Natural killer cell (primary cell): ENCODE measurements at regions of chr7 and their contacts with region 1.

Region 1: GRCh38 chr7:107743567-107744344 is at the start of gene CBLL1:
- DNase-seq: peak; percentile 97 to 98
- ATAC-seq: peak; percentile 88 to 97 (median 90)
- H3K4me3 ChIP-seq: peak within 1 kb of the TSS; percentile 81
- H3K4me3 Mint-ChIP-seq: peak within 1 kb of the TSS; percentile 96
- H3K27ac ChIP-seq: peak within 1 kb of the TSS; percentile 99
- H3K27ac Mint-ChIP-seq: peak within 1 kb of the TSS; percentile 100
- H3K4me1 ChIP-seq: peaks cover 15% of the 10 kb centered on the region
- H3K4me1 Mint-ChIP-seq: peaks cover 42 to 48% of the 10 kb centered on the region in 2 donors
- H3K27me3 ChIP-seq: no peaks in the 10 kb centered on the region
- H3K27me3 Mint-ChIP-seq: no peaks in the 10 kb centered on the region
- CTCF ChIP-seq: peak; percentile 65
- total RNA-seq, gene CBLL1: 62.7 to 85.8 (median 82.0) TPM

Region 2: DNA sequence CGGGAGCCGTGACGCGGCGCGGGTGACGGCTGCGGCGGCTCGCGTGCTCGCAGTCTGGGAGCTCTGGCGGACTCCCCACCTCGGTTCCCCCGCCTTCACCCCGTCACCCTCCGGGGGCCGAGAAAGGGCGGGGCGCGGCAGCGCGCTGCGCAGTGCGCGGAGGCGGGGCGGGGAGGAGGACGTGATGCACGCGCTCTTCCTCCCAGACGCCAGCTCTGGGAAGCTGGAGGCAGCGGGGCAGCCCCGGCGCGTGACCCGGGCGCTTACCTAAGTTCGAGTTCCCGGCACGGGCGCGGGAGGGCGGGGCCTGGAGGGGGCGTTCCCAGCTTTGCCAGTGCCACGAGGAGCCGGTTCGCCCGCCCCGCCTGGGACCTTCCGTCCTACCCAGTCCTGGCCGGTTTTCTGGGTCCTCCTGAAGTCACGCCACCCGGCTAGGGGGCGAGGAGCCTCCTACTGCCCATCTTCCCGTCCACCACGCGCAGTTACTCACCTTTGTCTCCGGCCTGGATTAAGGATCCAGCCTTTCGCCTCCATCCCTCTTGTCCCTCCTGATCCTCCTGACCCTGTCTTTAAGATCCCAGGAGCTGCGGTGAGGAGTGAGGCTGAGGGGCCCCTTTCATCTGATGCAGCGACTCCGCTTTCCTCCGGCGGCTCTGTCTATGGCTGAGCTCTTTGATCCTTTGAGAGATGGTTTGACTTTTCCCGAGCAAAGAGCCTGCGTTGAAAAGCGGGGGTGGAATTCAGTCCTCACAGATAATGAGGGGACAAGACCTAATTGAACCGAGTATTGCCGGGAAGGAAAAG is 1458.5 kb before region 1 on chr7:
- intact Hi-C with region 1: loop called (anchors 10 kb)
- DNase-seq: peak; percentile 92 to 98
- ATAC-seq: peak; percentile 88 to 96 (median 89)
- H3K4me3 ChIP-seq: peak overlapping the region; percentile 97
- H3K4me3 Mint-ChIP-seq: peak overlapping the region; percentile 95
- H3K27ac ChIP-seq: peak overlapping the region; percentile 97
- H3K27ac Mint-ChIP-seq: peak overlapping the region; percentile 93 to 95
- H3K4me1 ChIP-seq: peaks cover 12% of the 10 kb centered on the region
- H3K4me1 Mint-ChIP-seq: peaks cover 16 to 20% of the 10 kb centered on the region in 2 donors
- H3K27me3 ChIP-seq: no peaks in the 10 kb centered on the region
- H3K27me3 Mint-ChIP-seq: peaks cover under 1 to 2% of the 10 kb centered on the region in 2 donors
- CTCF ChIP-seq: no peak

Region 3: DNA sequence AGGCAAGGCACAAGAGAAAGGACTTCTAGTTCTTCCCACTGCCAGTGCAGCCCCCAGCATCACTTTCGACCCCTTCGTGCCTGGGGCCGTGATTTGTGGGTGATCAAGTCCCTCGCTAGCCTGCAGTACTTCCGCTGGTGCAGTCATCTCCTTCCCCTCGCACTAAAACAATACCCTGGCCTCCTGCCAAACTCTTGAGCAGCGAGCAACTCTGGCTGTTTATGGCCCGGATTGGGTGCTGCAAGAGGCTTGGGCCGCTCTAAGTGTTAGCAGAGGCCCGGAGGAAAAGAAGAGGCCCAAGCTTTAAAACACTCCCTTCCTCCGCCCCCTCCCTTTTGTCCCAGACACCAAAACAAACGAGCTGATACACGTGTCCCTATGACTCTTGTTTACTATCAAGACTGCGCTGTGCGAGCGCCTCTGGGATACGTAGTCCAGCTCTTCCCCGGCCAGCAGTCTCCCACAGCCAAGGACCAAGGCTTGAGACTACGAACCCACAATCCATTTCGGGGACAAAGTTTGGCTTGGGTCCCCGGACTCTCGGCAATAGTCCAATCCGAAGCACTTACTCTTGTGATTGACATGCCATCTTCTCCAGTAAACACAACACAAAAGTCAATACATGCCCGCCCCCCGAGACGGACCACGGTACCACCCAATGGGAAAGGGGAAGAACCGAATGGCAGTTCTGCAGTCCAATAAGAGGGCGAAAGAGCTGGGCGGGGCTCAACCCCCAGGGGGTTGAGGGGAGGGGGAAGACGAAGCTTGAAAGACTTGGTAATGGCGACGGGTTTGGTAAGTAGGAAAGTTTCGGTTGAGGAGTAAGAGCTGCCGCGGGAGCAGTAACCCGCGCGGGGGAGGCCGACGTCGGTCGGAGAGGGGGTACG is 575.3 kb before region 1 on chr7 and contains the start of gene HBP1:
- intact Hi-C with region 1: loop called (anchors 2 kb)
- DNase-seq: peak; percentile 95 to 99
- ATAC-seq: peak; percentile 74 to 90 (median 78)
- H3K4me3 ChIP-seq: peak within 1 kb of the TSS; percentile 96
- H3K4me3 Mint-ChIP-seq: peak within 1 kb of the TSS; percentile 95
- H3K27ac ChIP-seq: peak within 1 kb of the TSS; percentile 99
- H3K27ac Mint-ChIP-seq: peak within 1 kb of the TSS; percentile 99 to 100
- H3K4me1 ChIP-seq: peaks cover 11% of the 10 kb centered on the region
- H3K4me1 Mint-ChIP-seq: peaks cover 36 to 49% of the 10 kb centered on the region in 2 donors
- H3K27me3 ChIP-seq: no peaks in the 10 kb centered on the region
- H3K27me3 Mint-ChIP-seq: peaks cover 4% of the 10 kb centered on the region in 2 donors
- CTCF ChIP-seq: no peak
- total RNA-seq, gene HBP1: 186 to 249 (median 243) TPM

Region 4: GRCh38 chr7:107879400-107880035 is 135.8 kb after region 1 on chr7:
- intact Hi-C with region 1: loop called (anchors 2 kb)
- DNase-seq: peak in 1 of 2 donors; percentile 73
- ATAC-seq: peak; percentile 79 to 84 (median 83)
- H3K4me3 ChIP-seq: no peak overlapping the region
- H3K4me3 Mint-ChIP-seq: no peak overlapping the region
- H3K27ac ChIP-seq: no peak overlapping the region
- H3K27ac Mint-ChIP-seq: no peak overlapping the region
- H3K4me1 ChIP-seq: no peaks in the 10 kb centered on the region
- H3K4me1 Mint-ChIP-seq: peaks cover 0 to 2% of the 10 kb centered on the region in 2 donors
- H3K27me3 ChIP-seq: no peaks in the 10 kb centered on the region
- H3K27me3 Mint-ChIP-seq: peaks cover 18 to 32% of the 10 kb centered on the region in 2 donors
- CTCF ChIP-seq: peak; percentile 78

Region 5: DNA sequence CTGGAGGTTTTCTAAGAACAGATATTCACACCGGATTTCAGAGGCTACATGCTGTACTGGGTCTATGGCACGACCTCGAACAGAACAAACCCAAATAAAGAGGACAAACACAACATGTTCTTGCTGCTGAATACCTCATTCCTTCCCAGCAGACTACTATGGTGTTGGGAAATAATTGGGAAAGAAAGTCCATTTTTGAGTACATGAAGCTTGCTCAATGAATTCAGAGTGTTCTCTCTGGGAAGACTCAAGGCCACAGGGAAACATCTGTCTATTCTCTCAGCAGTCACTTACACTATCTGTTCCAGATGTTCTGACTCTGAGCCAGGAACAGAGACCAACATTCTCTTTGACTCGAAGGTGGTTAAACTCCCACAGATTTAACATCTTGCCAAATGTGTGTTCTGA is 228.3 kb after region 1 on chr7:
- intact Hi-C with region 1: no loop called
- DNase-seq: no peak
- ATAC-seq: no peak
- H3K4me3 ChIP-seq: no peak overlapping the region
- H3K4me3 Mint-ChIP-seq: no peak overlapping the region
- H3K27ac ChIP-seq: no peak overlapping the region
- H3K27ac Mint-ChIP-seq: no peak overlapping the region
- H3K4me1 ChIP-seq: no peaks in the 10 kb centered on the region
- H3K4me1 Mint-ChIP-seq: no peaks in the 10 kb centered on the region
- H3K27me3 ChIP-seq: no peaks in the 10 kb centered on the region
- H3K27me3 Mint-ChIP-seq: peaks cover 0 to 5% of the 10 kb centered on the region in 2 donors
- CTCF ChIP-seq: no peak

Region 6: DNA sequence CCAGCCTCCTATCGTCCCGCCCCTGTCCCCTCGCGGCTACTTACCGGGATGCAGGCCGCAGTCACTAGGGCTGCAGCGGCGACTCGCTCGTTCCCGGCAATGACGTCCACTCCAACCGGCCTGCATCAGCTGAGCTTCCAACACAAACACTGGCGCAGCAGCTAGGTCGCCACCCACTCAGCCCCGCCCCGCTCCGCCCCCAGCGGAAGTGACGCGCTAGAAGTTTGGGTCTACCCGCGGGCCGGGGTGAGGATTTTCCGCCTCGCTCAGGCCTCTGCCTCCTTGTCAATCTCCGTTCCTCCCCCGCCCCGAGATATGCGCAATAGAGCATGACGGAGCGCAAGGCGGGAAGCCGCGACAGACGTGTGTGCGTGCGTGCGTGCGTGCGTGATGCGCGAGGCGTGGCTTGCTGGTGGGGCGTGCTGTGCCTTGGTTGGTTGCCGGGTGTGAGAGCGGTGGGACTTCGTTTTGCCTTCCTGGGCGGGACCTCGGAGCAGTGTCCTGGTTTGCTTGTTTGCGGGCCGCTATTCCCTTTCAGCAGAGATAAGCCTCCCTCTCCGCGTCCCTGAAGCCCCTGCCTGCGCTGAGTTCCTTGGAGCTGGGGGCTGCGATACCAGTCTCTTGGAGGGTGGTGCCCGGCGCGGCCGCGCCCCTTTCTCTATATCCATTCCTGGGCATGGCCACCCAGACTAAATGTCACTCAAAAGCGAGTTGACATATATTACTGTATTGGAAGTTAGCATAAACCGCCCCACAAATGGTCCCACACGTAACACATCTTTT is 782.4 kb after region 1 on chr7 and contains the start of gene PNPLA8:
- intact Hi-C with region 1: loop called (anchors 5 kb)
- DNase-seq: peak; percentile 99 to 100
- ATAC-seq: peak; percentile 89 to 96 (median 89)
- H3K4me3 ChIP-seq: peak within 1 kb of the TSS; percentile 96
- H3K4me3 Mint-ChIP-seq: peak within 1 kb of the TSS; percentile 96
- H3K27ac ChIP-seq: peak within 1 kb of the TSS; percentile 99
- H3K27ac Mint-ChIP-seq: peak within 1 kb of the TSS; percentile 99
- H3K4me1 ChIP-seq: peaks cover 10% of the 10 kb centered on the region
- H3K4me1 Mint-ChIP-seq: peaks cover 34 to 37% of the 10 kb centered on the region in 2 donors
- H3K27me3 ChIP-seq: no peaks in the 10 kb centered on the region
- H3K27me3 Mint-ChIP-seq: peaks cover 0 to 4% of the 10 kb centered on the region in 2 donors
- CTCF ChIP-seq: no peak
- total RNA-seq, gene PNPLA8: 68.6 to 80.2 (median 68.9) TPM